ENCODE measurements at regions of chr17 and their contacts with region 1.

Region 1: DNA sequence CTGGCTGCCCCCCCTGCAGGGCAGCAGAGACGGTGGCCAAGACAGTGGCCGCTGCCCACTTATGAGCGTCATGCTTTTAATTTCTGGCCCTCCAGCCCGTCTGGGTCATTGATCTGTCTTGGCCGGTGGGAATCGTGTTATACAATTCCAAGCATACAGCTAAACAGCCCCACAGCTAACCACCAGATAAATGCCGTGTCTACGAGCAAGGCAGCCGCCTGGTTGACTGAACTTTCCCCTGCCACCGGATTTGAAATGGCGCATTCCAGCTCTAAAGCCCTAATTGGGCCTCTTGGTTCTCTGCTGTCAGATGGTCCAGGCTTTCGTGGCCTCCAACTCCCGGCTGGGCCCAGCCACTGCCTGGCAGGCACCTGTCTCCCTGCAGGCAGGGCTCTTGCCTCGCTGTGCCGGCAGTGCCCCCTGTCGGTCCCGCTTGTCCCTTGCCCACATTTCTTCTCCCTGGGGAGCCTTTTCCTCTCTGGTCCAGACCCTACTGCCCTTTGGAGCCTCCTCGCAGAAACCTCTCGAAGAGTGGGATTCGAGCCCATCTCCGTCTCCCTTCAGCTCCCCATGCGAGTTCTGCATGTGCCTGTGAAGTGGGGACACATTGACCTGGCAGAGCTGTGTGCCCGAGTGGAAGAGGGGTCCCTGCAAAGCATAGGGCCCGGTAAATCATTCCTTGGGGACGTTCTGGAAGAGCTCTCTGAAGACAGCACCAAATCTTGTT is 1.8 kb upstream of the RBFOX3 start:
- DNase-seq: peak; percentile 92 to 94
- ATAC-seq: peak; percentile 67 to 89
- H3K4me3 ChIP-seq: no peak overlapping the region
- H3K27ac ChIP-seq: peak overlapping the region; percentile 88 to 95
- H3K4me1 ChIP-seq: peaks cover 37% of the 10 kb centered on the region
- CTCF ChIP-seq: peak; percentile 97
- EP300 ChIP-seq: no peak
- POLR2A ChIP-seq: no peak
- RAD21 ChIP-seq: peak; percentile 96 to 97

Region 2: GRCh38 chr17:79400989-79401703 is 211.5 kb before region 1 on chr17:
- CTCF ChIA-PET with region 1: interaction called, 88 read pairs
- POLR2A ChIA-PET with region 1: no interaction called
- DNase-seq: peak; percentile 69 to 94
- ATAC-seq: peak; percentile 71 to 89
- H3K4me3 ChIP-seq: peak overlapping the region; percentile 29
- H3K27ac ChIP-seq: peak overlapping the region; percentile 64 to 83
- H3K4me1 ChIP-seq: peaks cover 24% of the 10 kb centered on the region
- CTCF ChIP-seq: peak; percentile 81
- EP300 ChIP-seq: no peak
- POLR2A ChIP-seq: no peak
- RAD21 ChIP-seq: peak; percentile 53 to 57

Region 3: DNA sequence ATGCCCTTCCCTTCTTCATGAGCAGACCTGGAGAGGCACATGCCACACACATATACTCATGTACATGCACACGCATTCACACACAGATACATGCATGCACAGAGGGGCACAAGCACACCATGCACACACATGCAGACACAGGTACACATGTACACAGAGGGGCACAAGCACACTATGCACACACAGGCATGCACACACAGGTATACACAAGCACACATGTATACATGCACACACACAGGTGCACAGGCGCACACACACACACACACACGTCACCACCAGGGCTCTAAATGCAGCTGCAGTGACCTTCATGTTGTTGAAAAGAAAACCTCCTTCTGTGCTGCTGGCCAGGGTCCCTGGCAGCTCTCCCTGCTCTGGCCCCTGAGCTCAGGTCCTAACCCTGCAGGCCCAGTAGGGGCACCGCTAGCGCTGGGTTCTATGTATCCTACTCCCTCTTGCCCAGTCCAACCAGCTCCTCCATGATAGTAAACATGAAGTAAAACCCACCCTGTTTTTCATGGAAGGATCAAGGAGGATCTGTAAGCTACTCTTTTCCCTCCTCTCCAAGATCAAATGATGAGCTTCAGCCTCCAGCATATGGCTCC is 174.7 kb before region 1 on chr17:
- CTCF ChIA-PET with region 1: interaction called, 18 read pairs
- POLR2A ChIA-PET with region 1: no interaction called
- DNase-seq: no peak
- ATAC-seq: peak; percentile 38 to 69; a peak in 3 of 6 replicates
- H3K4me3 ChIP-seq: no peak overlapping the region
- H3K27ac ChIP-seq: peak overlapping the region in 1 of 2 experiments; percentile 15; a peak in 1 of 6 replicates
- H3K4me1 ChIP-seq: peaks cover 37% of the 10 kb centered on the region
- CTCF ChIP-seq: no peak
- EP300 ChIP-seq: no peak
- POLR2A ChIP-seq: no peak
- RAD21 ChIP-seq: no peak

Region 4: GRCh38 chr17:79482752-79483521 is 129.7 kb before region 1 on chr17:
- CTCF ChIA-PET with region 1: interaction called, 10 read pairs
- POLR2A ChIA-PET with region 1: no interaction called
- DNase-seq: no peak
- ATAC-seq: 0 out of 6 replicates have a peak, but pooled peaks of 1 of the 2 experiments have one; percentile 12
- H3K4me3 ChIP-seq: no peak overlapping the region
- H3K27ac ChIP-seq: peak overlapping the region; percentile 59 to 78
- H3K4me1 ChIP-seq: peaks cover 49% of the 10 kb centered on the region
- CTCF ChIP-seq: no peak
- EP300 ChIP-seq: 0 out of 5 replicates have a peak, but pooled peaks of 1 of the 2 experiments have one; percentile 22
- POLR2A ChIP-seq: no peak
- RAD21 ChIP-seq: no peak

Region 5: GRCh38 chr17:79563237-79564013 is 49.2 kb before region 1 on chr17:
- CTCF ChIA-PET with region 1: interaction called, 19 read pairs
- POLR2A ChIA-PET with region 1: no interaction called
- DNase-seq: peak; percentile 60 to 92
- ATAC-seq: peak; percentile 69 to 83
- H3K4me3 ChIP-seq: no peak overlapping the region; the same call in 2 of the 3 replicates
- H3K27ac ChIP-seq: peak overlapping the region; percentile 85 to 89
- H3K4me1 ChIP-seq: peaks cover 49% of the 10 kb centered on the region
- CTCF ChIP-seq: no peak
- EP300 ChIP-seq: peak; percentile 80 to 87; a peak in 4 of 5 replicates
- POLR2A ChIP-seq: no peak
- RAD21 ChIP-seq: no peak

Region 6: DNA sequence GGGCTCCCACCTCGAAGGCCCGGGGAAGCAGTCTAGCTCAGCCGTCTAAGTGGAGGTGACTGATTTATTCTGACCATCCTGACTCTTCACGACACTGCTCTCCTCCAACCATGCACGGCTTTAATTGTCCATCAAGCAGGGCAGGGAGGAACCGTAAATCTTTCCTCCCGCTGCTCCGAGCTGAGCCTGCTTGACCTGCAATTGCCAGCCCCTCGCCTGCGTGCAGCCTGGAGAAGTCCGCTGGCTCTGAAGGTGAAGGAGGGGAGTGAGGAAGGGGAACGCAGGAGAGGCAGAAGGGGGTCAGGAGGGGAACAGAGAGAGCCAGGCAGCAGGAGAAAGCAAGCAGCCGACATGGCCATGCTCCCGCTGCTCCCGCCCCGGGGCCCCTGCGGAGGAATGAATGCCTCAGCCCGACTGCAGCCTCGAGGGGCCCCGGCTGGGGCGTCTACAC is 11.9 kb before region 1 on chr17:
- CTCF ChIA-PET with region 1: interaction called, 53 read pairs
- POLR2A ChIA-PET with region 1: no interaction called
- DNase-seq: no peak
- ATAC-seq: no peak; a peak in 1 of 6 replicates
- H3K4me3 ChIP-seq: no peak overlapping the region
- H3K27ac ChIP-seq: no peak overlapping the region
- H3K4me1 ChIP-seq: no peaks in the 10 kb centered on the region
- CTCF ChIP-seq: no peak
- EP300 ChIP-seq: no peak
- POLR2A ChIP-seq: no peak
- RAD21 ChIP-seq: no peak

Region 7: GRCh38 chr17:79695797-79696609 is 83.4 kb after region 1 on chr17:
- CTCF ChIA-PET with region 1: interaction called, 15 read pairs
- POLR2A ChIA-PET with region 1: no interaction called
- DNase-seq: no peak
- ATAC-seq: peak; percentile 22 to 65; a peak in 4 of 6 replicates
- H3K4me3 ChIP-seq: no peak overlapping the region
- H3K27ac ChIP-seq: peak overlapping the region; percentile 19 to 51; a peak in 5 of 6 replicates
- H3K4me1 ChIP-seq: peaks cover 35% of the 10 kb centered on the region
- CTCF ChIP-seq: no peak
- EP300 ChIP-seq: no peak
- POLR2A ChIP-seq: no peak
- RAD21 ChIP-seq: no peak

Measured in A549 (cell line).